PC-9 (cell line): ENCODE measurements at regions of chr2 and their contacts with region 1.

Region 1: DNA sequence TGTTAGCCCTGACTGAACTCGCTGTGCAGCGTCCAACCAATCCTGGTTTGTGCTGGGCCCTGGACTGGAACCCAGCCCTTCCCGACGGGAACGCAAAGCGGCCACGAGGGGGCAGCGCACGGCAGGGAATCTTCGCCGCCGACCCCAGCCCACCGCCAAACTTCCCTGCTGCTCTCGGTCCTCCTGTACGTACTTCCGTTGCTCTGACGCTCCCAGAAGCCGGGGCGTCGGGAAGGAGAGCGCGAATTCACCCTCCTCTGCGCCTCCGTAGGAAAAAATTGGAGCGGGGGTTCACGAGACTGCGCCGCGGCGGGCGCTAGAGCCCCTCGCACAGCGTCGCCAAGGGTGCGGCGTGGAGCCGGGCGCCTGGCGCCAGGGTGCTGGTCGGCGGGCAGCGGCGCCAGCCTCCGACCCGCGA is 948 bp upstream of the SH3RF3 start:
- DNase-seq: peak; percentile 49 to 79
- H3K4me3 ChIP-seq: peak overlapping the region; percentile 70
- H3K27ac ChIP-seq: no peak overlapping the region
- H3K4me1 ChIP-seq: peaks cover 57% of the 10 kb centered on the region
- H3K27me3 ChIP-seq: no peaks in the 10 kb centered on the region
- CTCF ChIP-seq: peak; percentile 90

Region 2: DNA sequence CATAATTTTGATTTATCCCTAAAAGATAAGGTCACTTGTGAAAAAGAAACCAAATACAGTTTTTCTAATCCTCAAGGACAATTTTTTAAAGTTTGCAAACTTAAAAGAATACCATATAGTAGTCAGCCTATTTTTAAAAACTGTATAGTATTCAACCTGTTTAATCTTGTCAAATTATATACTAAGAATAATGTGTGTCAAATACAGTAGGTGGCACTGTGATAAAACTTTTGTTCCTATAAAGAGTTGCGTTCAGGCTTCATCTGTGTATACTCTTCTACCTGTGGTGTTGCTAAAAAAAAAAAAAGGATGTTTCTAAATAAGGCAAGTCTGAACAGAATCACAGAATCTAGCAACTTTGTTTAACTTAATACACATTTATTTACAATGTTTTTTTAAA is 272.9 kb before region 1 on chr2:
- CTCF ChIA-PET with region 1: no interaction called
- POLR2A ChIA-PET with region 1: no interaction called
- intact Hi-C with region 1: loop called (anchors 1 kb)
- DNase-seq: no peak
- H3K4me3 ChIP-seq: no peak overlapping the region
- H3K27ac ChIP-seq: no peak overlapping the region
- H3K4me1 ChIP-seq: no peaks in the 10 kb centered on the region
- H3K27me3 ChIP-seq: no peaks in the 10 kb centered on the region
- CTCF ChIP-seq: peak; percentile 63

Region 3: GRCh38 chr2:109013051-109013450 is 115.0 kb before region 1 on chr2:
- CTCF ChIA-PET with region 1: no interaction called
- POLR2A ChIA-PET with region 1: no interaction called
- intact Hi-C with region 1: loop called (anchors 1 kb)
- DNase-seq: peak; percentile 44 to 84
- H3K4me3 ChIP-seq: no peak overlapping the region
- H3K27ac ChIP-seq: no peak overlapping the region
- H3K4me1 ChIP-seq: peaks cover 18% of the 10 kb centered on the region
- H3K27me3 ChIP-seq: no peaks in the 10 kb centered on the region
- CTCF ChIP-seq: no peak

Region 4: GRCh38 chr2:109062859-109063700 is 65.0 kb before region 1 on chr2:
- CTCF ChIA-PET with region 1: no interaction called
- POLR2A ChIA-PET with region 1: no interaction called
- intact Hi-C with region 1: no loop called
- DNase-seq: no peak
- H3K4me3 ChIP-seq: no peak overlapping the region
- H3K27ac ChIP-seq: no peak overlapping the region
- H3K4me1 ChIP-seq: no peaks in the 10 kb centered on the region
- H3K27me3 ChIP-seq: 0 out of 2 replicates have a peak, but pooled peaks cover 8% of the 10 kb centered on the region
- CTCF ChIP-seq: no peak

Region 5: DNA sequence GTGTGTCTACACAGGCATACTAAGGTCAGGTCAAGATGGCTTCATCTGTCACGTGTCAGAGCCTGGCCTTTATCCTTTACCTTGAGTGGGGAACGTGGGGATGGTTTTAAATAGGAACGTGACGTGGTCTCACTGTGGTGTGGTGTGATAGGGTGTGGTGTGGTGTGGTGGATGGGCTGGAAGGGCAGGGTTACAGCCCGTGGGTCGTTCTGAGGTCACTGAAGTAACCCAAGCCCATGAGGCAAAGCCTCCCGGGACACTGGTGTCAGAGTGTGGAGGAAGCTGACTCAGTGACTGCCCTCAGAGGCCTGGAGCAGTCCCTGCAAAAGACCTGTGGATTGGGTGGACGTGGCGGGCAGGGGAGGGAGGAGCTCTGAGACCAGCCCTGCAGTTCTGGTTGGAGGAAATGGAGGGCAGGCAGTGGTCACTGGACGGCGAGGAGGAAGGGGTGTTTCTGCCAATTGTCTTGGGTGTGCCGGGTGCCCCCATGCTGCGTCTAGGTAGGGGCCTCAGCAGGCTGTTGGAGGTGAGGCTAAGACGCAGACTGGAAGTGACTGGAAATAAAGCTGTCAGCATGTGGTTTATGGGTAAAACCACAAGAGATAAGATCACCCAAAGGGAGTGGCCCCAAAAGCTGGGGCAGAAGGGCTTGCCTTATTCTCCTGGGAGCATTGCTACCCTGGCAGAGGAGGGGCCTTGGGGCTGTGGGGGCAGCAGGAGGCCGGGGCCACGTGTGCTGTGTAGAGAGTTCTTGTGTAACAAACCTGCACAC is 85.8 kb after region 1 on chr2:
- CTCF ChIA-PET with region 1: no interaction called
- POLR2A ChIA-PET with region 1: no interaction called
- intact Hi-C with region 1: loop called (anchors 1 kb)
- DNase-seq: peak; percentile 91 to 96
- H3K4me3 ChIP-seq: no peak overlapping the region
- H3K27ac ChIP-seq: peak overlapping the region; percentile 82
- H3K4me1 ChIP-seq: peaks cover 75% of the 10 kb centered on the region
- H3K27me3 ChIP-seq: no peaks in the 10 kb centered on the region
- CTCF ChIP-seq: no peak

Region 6: GRCh38 chr2:109348671-109349550 is 220.9 kb after region 1 on chr2:
- CTCF ChIA-PET with region 1: no interaction called
- POLR2A ChIA-PET with region 1: no interaction called
- intact Hi-C with region 1: loop called (anchors 5 kb)
- DNase-seq: no peak
- H3K4me3 ChIP-seq: no peak overlapping the region
- H3K27ac ChIP-seq: no peak overlapping the region
- H3K4me1 ChIP-seq: 0 out of 2 replicates have a peak, but pooled peaks cover 8% of the 10 kb centered on the region
- H3K27me3 ChIP-seq: no peaks in the 10 kb centered on the region
- CTCF ChIP-seq: no peak

Region 7: DNA sequence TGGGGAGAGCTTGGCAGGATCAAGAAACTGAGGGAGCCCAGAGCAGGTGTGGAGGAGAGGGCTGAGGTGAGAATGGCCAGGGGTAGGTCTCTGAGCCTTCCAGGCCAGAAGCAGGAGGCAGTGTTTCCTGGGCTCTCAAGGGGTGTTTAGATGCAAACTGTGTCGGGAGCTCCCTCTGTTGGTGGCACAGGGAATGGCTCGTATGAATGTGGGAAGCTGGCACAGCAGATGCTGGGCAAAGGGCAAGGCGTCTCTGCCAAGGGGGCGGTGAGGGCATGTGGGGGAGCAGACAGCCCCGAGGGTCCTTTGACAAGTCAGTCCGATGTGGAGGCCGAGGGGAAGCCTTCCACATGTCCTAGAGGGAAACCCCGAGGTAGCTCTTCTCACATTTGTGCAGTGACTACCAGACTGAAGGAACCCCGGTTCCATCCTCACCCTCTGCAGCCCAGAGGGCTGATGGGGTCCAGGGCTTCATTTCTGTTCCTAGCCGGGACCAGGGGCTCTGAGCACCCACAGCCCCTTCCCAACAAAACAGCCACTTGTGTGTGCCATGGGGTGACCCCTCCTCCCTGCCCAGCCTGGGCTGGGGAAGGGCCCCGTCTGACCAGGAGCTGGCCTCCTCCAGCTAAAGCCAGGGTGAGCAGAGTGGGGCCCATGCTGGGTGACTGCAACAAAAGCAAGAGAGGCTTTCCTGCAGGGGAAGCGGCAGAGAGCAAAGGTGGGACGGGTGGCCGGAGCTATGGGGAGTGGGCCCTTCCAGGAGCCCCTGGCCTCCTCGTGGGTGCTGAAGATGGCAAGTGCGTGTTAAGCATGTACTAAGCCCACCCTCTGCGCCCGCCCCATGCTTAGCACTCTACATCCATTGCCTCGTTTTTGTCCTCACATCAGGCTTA is 382.3 kb after region 1 on chr2:
- CTCF ChIA-PET with region 1: interaction called, 3 read pairs
- POLR2A ChIA-PET with region 1: no interaction called
- intact Hi-C with region 1: loop called (anchors 1 kb)
- DNase-seq: peak; percentile 50 to 78
- H3K4me3 ChIP-seq: no peak overlapping the region
- H3K27ac ChIP-seq: no peak overlapping the region
- H3K4me1 ChIP-seq: peaks cover 5% of the 10 kb centered on the region; the same call in 1 of the 2 replicates
- H3K27me3 ChIP-seq: no peaks in the 10 kb centered on the region
- CTCF ChIP-seq: peak; percentile 93

Region 8: GRCh38 chr2:109715313-109715805 is 587.3 kb after region 1 on chr2:
- CTCF ChIA-PET with region 1: no interaction called
- POLR2A ChIA-PET with region 1: no interaction called
- intact Hi-C with region 1: loop called (anchors 5 kb)
- DNase-seq: peak in 1 of 2 experiments; percentile 55
- H3K4me3 ChIP-seq: no peak overlapping the region
- H3K27ac ChIP-seq: no peak overlapping the region
- H3K4me1 ChIP-seq: no peaks in the 10 kb centered on the region
- H3K27me3 ChIP-seq: no peaks in the 10 kb centered on the region
- CTCF ChIP-seq: peak; percentile 70